PC-9 (cell line): ENCODE measurements at regions of chr1 and their contacts with region 1.

Region 1: GRCh38 chr1:37859507-37860345 is at the start of gene MTF1:
- DNase-seq: peak; percentile 91 to 97
- H3K4me3 ChIP-seq: peak within 1 kb of the TSS; percentile 76
- H3K27ac ChIP-seq: peak within 1 kb of the TSS; percentile 91
- H3K4me1 ChIP-seq: peaks cover 31% of the 10 kb centered on the region
- H3K27me3 ChIP-seq: no peaks in the 10 kb centered on the region
- CTCF ChIP-seq: peak; percentile 92
- total RNA-seq, gene MTF1: 22.1 and 22.5 TPM in 2 replicates

Region 2: DNA sequence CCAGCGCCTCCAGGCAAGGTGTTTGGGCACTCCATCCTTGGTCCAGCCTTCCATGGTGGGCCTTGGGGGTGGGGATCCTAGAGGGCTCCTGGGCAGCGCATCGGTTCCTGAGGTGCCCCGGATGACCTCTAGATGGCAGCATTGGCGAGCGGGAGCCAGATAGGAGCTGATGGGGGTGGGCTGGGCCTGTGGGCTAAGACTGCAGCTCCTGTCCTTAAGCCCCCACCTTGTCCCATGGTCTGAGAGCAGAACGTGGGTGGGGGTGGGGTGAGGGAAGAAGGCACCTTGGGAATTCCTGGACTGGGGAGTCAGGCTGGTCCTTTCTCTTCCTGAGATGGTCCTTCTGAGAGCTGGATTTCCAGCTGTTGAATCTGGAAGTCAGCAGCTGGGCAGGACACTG is 1283.6 kb before region 1 on chr1:
- CTCF ChIA-PET with region 1: interaction called, 15 read pairs
- POLR2A ChIA-PET with region 1: no interaction called
- intact Hi-C with region 1: no loop called
- DNase-seq: peak; percentile 48 to 64
- H3K4me3 ChIP-seq: no peak overlapping the region
- H3K27ac ChIP-seq: no peak overlapping the region
- H3K4me1 ChIP-seq: no peaks in the 10 kb centered on the region
- H3K27me3 ChIP-seq: peaks cover 30% of the 10 kb centered on the region
- CTCF ChIP-seq: peak; percentile 87

Region 3: DNA sequence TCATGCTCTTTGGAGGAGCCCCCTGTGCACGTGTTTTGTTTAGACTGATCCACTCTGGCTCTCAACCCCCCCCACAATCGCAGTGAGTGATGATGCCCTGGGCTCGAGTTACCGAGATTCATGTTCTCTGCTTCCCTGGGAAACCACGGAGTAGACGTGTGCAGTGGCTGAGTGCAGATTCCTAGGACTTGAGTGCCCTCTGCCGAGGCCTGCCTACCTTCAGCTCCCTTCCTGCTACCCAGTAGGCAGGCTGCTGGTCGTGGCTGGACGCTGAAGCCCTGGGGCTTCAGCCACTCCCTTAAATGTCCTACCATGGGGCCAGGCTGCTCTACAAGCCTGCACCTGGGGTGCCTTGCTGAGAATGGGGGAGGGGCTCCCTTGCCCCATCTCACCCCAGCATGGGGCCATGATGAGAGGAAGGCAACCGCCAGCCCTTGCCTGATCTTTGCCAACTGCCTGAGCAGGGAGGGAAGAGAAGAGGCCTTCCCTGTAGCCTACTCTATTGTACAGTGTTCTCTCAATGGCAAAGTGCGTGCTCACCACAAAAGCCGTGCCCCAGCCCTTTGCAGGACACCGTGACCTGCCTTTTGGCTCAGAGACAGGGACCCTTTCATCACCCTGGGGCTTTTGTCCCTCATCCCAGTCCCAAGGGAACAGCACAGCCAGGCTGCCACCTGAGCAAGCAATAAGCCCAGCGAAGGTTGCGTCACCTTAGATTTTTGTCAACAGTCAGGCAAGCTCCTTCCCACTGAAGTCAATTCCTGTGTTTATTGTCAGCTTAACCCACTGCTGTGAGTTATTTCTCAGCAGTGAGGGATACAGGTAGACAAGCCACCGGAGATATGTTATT is 821.3 kb before region 1 on chr1:
- CTCF ChIA-PET with region 1: no interaction called
- POLR2A ChIA-PET with region 1: no interaction called
- intact Hi-C with region 1: no loop called
- DNase-seq: peak in 1 of 2 experiments; percentile 57
- H3K4me3 ChIP-seq: no peak overlapping the region
- H3K27ac ChIP-seq: no peak overlapping the region
- H3K4me1 ChIP-seq: no peaks in the 10 kb centered on the region
- H3K27me3 ChIP-seq: peaks cover 28% of the 10 kb centered on the region; the same call in 1 of the 2 replicates
- CTCF ChIP-seq: peak; percentile 51